AG04449 (cell line): ENCODE measurements at regions of chr11 and their contacts with region 1.

Region 1: DNA sequence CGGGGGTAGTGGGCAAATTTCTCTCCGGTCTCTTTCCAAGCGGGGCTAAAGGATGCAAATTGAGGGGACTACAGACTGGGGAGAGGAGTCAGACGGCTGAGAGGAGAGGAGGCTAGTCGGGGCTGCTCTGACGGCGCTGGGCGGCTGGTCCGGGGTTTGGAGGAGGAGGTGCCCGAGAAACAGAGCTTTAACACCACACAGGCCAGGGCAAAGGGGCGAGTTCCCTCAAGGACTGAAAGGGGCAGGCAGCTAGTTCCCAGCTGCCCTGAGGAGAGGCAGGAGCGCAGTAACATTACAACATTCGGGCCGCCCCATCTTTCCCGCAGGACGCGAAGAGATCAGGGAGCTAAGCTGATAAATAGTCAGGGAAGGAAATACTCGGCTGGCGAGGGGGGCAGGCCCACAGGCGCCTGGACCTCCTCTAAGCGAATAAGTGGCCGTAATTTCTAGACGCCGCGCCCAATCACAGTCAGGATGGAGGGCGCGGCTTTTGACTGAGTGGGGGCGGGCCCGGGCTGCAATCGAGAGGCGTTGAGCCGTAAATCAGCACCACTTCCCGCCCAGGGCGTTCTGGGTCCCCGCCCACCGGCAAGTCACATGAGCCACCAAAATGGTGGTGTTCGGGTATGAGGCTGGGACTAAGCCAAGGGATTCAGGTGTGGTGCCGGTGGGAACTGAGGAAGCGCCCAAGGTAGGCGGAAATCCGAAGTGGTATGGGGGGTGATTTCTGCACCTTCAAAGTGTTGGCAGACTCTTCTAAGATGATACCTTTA is at the start of gene TMEM126B:
- DNase-seq: peak; percentile 69
- H3K4me3 ChIP-seq: peak within 1 kb of the TSS; percentile 78
- CTCF ChIP-seq: no peak

Region 2: DNA sequence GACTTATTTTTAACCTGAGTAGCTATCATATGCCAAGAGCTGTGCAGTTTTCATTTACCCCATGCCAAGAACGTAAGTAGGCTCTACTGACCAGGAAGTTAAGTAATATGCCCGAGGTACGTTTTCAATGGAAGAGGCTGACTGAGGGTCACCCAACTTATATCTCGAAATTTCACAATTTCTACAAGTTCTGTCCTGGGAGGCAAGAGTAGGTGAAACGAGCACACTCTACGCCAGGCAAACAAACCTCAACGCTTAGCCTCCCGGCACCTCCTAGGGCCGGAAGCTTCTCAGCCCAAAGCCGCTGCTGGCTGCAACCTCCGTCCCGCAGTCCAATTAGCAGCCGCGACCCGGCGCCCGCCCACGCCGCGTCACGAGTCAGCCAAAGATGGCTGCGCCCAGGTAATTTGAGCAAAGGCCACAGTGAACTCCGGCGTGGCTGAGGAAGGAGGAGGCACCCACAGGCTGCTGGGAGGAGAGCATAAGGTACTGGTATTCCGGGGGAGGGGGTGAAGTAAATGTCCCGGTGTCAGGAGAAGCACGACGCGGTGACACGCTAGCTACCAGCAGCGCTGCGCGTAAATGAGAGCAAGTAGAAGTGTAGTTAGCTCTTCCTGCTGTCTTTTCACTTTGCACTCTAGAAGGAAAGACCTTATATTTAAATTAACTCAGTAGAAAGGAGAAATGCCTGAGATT is 19.6 kb after region 1 on chr11 and contains the start of gene TMEM126A:
- CTCF ChIA-PET with region 1: interaction called, 3 read pairs
- POLR2A ChIA-PET with region 1: interaction called, 14 read pairs
- DNase-seq: no peak
- H3K4me3 ChIP-seq: peak within 1 kb of the TSS; percentile 76
- CTCF ChIP-seq: no peak

Region 3: DNA sequence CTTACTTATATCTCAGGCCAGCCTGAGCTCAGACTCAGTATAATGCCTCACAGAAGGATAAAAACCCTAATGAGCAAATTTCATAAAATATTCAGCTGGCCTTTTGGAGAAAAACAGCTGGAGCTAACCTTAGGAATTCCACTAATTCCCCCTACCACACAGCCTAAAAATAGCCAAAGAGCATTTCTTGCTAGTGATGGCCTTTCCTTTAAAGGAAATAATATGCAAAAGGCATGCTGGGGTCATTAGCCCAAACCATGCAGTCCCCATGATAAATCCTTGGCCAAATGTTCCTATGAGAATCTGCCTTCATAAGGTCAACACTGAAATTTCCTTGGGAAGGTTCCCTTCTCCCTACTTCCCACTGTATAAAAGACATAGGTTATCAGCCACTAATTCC is 144.5 kb after region 1 on chr11:
- CTCF ChIA-PET with region 1: no interaction called
- POLR2A ChIA-PET with region 1: no interaction called
- DNase-seq: peak; percentile 83
- H3K4me3 ChIP-seq: no peak overlapping the region
- CTCF ChIP-seq: no peak